Esophagus muscularis mucosa (tissue), 4 donors: ENCODE measurements at regions of chr9 and their contacts with region 1.

Region 1: DNA sequence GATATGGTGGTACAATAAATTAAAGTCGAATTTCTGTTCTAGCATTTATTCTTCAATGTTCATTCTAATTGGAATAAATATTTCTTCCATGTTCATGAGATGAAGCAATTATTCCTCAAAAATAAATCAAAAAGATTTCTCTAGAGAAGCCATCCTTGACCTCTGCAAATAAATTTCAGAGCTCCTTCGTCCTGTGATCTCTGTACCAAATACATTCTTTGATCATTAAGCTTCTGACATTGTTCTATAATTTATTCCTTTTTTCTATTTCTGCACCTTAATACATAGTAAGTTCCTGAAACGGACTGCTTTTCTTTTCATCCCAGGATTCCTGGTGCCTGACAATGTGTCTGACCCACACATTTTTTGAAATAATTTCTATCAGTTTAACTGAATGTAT is 1039.3 kb upstream of the TYRP1 start:
- DNase-seq: no peak
- H3K4me3 ChIP-seq: no peak overlapping the region
- H3K27ac ChIP-seq: no peak overlapping the region
- H3K4me1 ChIP-seq: no peaks in the 10 kb centered on the region
- H3K27me3 ChIP-seq: no peaks in the 10 kb centered on the region
- CTCF ChIP-seq: no peak
- EP300 ChIP-seq: no peak
- POLR2A ChIP-seq: no peak

Region 2: DNA sequence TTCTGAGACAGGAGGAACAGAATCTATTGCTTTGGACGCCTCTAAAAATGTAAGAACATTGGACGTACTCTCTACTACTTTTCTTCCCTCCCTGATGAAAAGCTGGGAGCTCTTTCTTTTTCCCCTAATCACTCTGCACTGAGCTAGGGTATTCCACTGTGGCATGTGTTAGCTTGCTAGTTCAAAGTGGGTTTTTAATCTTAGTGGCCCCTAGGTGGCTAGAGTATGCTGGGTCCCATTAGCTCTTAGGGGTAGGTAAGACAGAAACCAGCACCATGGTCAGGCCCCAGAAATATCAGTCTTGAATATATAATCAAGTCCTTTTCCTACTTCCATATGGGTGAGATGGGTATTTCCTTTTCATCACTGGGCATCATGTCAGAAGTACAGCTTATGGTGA is 95.8 kb before region 1 on chr9:
- intact Hi-C with region 1: no loop called
- DNase-seq: no peak
- H3K4me3 ChIP-seq: no peak overlapping the region
- H3K27ac ChIP-seq: no peak overlapping the region
- H3K4me1 ChIP-seq: no peaks in the 10 kb centered on the region
- H3K27me3 ChIP-seq: no peaks in the 10 kb centered on the region
- CTCF ChIP-seq: no peak
- EP300 ChIP-seq: no peak
- POLR2A ChIP-seq: no peak

Region 3: GRCh38 chr9:11595756-11596155 is 58.1 kb before region 1 on chr9:
- intact Hi-C with region 1: loop called (anchors 10 kb)
- DNase-seq: no peak
- H3K4me3 ChIP-seq: no peak overlapping the region
- H3K27ac ChIP-seq: no peak overlapping the region
- H3K4me1 ChIP-seq: no peaks in the 10 kb centered on the region
- H3K27me3 ChIP-seq: no peaks in the 10 kb centered on the region
- CTCF ChIP-seq: no peak
- EP300 ChIP-seq: no peak
- POLR2A ChIP-seq: no peak